ENCODE measurements at regions of chr15 and their contacts with region 1.

Region 1: DNA sequence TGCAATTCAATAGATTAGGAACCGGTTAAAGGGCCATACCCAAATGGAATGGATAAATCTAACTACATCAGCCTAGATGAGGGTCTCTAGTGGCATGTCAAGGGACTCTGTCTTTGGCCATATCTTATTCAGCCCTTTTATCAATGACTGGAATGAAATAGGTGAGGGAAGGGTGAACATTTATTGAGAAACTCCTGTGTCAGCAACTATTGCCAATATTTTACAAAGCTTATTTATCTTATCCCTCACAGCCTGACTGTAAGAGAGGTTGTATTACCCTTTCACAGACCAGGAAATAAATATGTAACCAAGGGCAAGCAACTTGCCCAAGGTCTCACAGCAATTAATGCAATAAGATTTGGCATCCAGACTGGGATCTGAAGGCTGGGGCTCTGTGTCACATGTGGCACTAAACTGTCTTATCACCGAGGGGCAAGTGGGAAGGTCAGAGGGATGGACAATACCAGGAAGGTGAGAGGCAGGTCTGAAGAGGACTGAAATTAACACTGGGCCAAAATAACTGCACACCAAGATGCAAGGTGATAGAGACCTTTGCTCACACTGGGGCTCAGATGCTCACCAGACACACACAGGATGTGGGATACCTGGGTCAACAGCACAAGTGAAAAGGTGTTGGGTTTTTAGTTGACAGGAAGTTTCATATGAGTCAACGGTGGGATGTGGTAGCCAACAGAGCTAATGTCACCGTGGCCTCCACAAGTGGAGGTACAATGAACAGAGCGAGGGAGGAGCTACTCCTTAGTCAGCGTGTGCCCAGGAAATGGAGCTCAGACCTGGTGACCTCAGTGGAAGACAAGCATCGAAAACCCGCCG is 261.3 kb downstream of the RPLP1 start:
- DNase-seq: peak; percentile 79
- H3K4me3 Mint-ChIP-seq: peak overlapping the region; percentile 40
- H3K27ac Mint-ChIP-seq: peak overlapping the region; percentile 85
- H3K4me1 Mint-ChIP-seq: peaks cover 49% of the 10 kb centered on the region
- H3K27me3 Mint-ChIP-seq: peaks cover 19% of the 10 kb centered on the region

Region 2: GRCh38 chr15:69679623-69680228 is 34.2 kb before region 1 on chr15:
- intact Hi-C with region 1: loop called (anchors 2 kb)
- DNase-seq: peak; percentile 6
- H3K4me3 Mint-ChIP-seq: no peak overlapping the region
- H3K27ac Mint-ChIP-seq: no peak overlapping the region
- H3K4me1 Mint-ChIP-seq: peaks cover 19% of the 10 kb centered on the region
- H3K27me3 Mint-ChIP-seq: peaks cover 22% of the 10 kb centered on the region

Region 3: GRCh38 chr15:69760890-69761568 is 47.1 kb after region 1 on chr15:
- intact Hi-C with region 1: loop called (anchors 1 kb)
- DNase-seq: peak; percentile 79
- H3K4me3 Mint-ChIP-seq: peak overlapping the region; percentile 72
- H3K27ac Mint-ChIP-seq: peak overlapping the region; percentile 92
- H3K4me1 Mint-ChIP-seq: peaks cover 81% of the 10 kb centered on the region
- H3K27me3 Mint-ChIP-seq: peaks cover 2% of the 10 kb centered on the region

Region 4: GRCh38 chr15:69903470-69904469 is 189.8 kb after region 1 on chr15:
- intact Hi-C with region 1: no loop called
- DNase-seq: no peak
- H3K4me3 Mint-ChIP-seq: no peak overlapping the region
- H3K27ac Mint-ChIP-seq: no peak overlapping the region
- H3K4me1 Mint-ChIP-seq: no peaks in the 10 kb centered on the region
- H3K27me3 Mint-ChIP-seq: no peaks in the 10 kb centered on the region

Region 5: GRCh38 chr15:70140543-70141375 is 426.8 kb after region 1 on chr15:
- intact Hi-C with region 1: loop called (anchors 5 kb)
- DNase-seq: peak; percentile 8
- H3K4me3 Mint-ChIP-seq: peak overlapping the region; percentile 54
- H3K27ac Mint-ChIP-seq: peak overlapping the region; percentile 53
- H3K4me1 Mint-ChIP-seq: peaks cover 33% of the 10 kb centered on the region
- H3K27me3 Mint-ChIP-seq: peaks cover 28% of the 10 kb centered on the region

Region 6: DNA sequence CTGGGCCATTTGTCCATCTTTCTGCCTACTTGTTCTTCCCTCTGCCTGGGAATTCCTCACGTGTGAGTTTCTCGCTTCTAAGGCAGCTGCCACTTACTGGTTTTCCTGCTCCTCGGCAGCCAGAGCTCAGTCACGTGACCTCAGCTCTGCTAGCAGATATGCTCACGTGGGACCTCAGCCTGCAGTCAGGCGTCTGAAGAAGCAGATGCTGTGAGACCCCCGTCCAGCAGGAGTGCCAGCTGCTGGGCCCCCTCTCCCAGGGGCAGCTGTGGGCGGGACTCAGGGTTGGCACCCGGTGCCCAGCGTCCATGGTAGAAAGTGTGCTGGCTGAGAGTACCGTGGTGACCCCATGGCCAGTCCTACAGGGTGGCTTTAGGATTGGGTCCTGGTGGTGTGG is 545.1 kb after region 1 on chr15:
- intact Hi-C with region 1: loop called (anchors 5 kb)
- DNase-seq: peak; percentile 15
- H3K4me3 Mint-ChIP-seq: peak overlapping the region; percentile 45
- H3K27ac Mint-ChIP-seq: no peak overlapping the region
- H3K4me1 Mint-ChIP-seq: peaks cover 37% of the 10 kb centered on the region
- H3K27me3 Mint-ChIP-seq: peaks cover 50% of the 10 kb centered on the region

Region 7: DNA sequence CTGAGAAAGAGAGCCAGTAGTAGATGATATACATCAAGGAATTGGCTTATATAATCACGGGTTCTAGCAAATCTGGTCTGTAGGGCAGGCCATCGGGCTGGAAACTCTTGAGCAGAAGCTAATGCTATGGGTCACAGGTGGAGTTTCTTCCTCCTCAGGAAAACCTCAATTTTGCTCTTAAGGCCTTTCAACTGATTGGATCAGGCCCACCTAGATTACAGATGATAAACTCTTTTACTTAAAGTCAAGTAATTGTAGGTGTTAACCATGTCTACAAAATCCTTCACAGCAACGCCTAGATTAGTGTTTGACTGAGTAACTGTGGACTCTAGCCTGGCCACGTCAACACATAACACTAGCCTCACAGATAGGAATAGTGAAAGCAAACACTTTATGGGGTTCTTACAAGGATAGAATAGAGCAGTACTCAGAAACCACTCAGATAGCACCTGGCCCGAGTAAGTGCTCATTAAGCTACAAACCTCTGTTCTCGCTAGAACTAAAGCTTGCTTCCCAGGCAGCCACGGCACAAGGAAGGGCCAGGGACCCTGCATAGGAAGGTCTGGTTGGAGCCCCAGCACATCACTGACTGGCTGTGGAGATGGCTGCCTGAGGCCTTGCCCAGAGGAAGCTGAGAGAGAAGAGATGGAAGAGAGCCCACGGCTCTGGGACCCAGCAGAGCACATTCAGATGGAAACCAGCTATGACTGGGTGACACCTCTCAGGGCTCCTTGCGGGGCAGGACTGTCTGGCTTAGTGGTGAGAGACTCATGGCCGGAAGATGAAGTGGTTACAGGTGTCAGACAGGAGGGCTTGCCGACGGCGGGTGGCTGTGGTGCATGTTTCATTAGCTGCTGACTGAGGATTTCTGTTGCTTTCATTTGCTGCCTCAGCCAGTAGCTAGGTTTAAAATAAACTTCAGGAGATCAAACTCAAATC is 586.3 kb after region 1 on chr15:
- intact Hi-C with region 1: loop called (anchors 5 kb)
- DNase-seq: peak; percentile 71
- H3K4me3 Mint-ChIP-seq: no peak overlapping the region
- H3K27ac Mint-ChIP-seq: peak overlapping the region; percentile 24
- H3K4me1 Mint-ChIP-seq: peaks cover 9% of the 10 kb centered on the region
- H3K27me3 Mint-ChIP-seq: peaks cover 22% of the 10 kb centered on the region

Region 8: DNA sequence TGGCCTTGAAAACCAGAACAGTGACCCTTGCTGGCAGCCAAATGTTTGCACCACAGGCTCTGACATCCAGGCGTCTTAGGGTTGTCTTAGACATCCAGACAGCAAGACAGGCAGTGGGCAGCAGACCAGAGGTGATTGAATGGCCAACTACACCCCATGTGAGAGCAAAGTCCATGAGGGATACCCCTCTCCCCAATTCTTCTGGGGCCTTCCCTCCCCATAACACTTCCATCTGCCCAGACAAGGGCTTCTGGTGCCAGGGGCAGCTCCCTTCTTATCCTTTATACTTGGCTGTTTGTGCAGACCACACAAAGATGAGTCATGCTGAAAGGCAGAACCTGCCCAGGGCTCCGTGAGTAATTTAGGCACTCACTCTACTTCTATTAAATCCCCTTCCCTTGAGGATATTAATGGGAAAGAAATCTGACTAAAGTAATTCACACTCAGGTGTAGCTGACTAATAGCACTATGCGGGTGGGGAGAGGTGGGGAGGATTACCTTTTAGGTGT is 791.5 kb after region 1 on chr15:
- intact Hi-C with region 1: loop called (anchors 5 kb)
- DNase-seq: no peak
- H3K4me3 Mint-ChIP-seq: peak overlapping the region; percentile 42
- H3K27ac Mint-ChIP-seq: peak overlapping the region; percentile 72
- H3K4me1 Mint-ChIP-seq: peaks cover 86% of the 10 kb centered on the region
- H3K27me3 Mint-ChIP-seq: peaks cover 7% of the 10 kb centered on the region

Measured in activated T-helper 1 cell treated with anti-CD3 and anti-CD28 coated beads, Interleukin-12 subunit alpha, Interleukin-12 subunit beta, Interleukin-2, Interleukin-4 antibody, amounts not matched to agents 30 ng/mL and 10 ng/mL and 1 ng/mL, durations not matched to agents 14 hours and 24 hours and 36 hours (primary cell).